Heart right ventricle (tissue), 16 donors: ENCODE measurements at regions of chr18 and their contacts with region 1.

Region 1: GRCh38 chr18:53745224-53745967 is 479.1 kb downstream of the MBD2 start:
- DNase-seq: no peak
- ATAC-seq: no peak
- H3K4me3 ChIP-seq: no peak overlapping the region
- H3K27ac ChIP-seq: no peak overlapping the region
- H3K4me1 ChIP-seq: no peaks in the 10 kb centered on the region
- H3K27me3 ChIP-seq: no peaks in the 10 kb centered on the region
- CTCF ChIP-seq: no peak

Region 2: GRCh38 chr18:53757328-53757727 is 11.9 kb after region 1 on chr18:
- intact Hi-C with region 1: no loop called
- DNase-seq: no peak
- ATAC-seq: no peak
- H3K4me3 ChIP-seq: no peak overlapping the region
- H3K27ac ChIP-seq: no peak overlapping the region
- H3K4me1 ChIP-seq: no peaks in the 10 kb centered on the region
- H3K27me3 ChIP-seq: no peaks in the 10 kb centered on the region
- CTCF ChIP-seq: no peak

Region 3: DNA sequence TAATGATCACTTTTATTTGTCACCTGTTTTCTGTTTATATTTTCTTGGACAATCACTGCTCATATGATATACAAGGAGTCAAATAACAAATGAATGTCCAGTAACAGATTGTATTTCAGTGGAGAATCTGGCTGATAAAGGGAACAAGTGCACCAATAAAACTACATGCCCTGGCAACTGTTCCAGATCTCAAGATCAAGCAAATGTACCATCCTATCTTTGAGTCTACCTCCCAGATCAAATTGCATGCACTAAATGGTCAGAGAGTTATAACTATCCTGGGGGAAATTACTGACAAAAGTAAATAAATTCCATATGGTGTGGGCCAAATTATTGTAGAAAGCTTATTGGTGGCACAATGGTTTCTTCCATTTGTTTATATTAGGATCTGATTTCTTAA is 26.3 kb after region 1 on chr18:
- intact Hi-C with region 1: loop called in 1 of 10 experiments (anchors 1 kb)
- DNase-seq: no peak
- ATAC-seq: no peak
- H3K4me3 ChIP-seq: no peak overlapping the region
- H3K27ac ChIP-seq: no peak overlapping the region
- H3K4me1 ChIP-seq: no peaks in the 10 kb centered on the region
- H3K27me3 ChIP-seq: no peaks in the 10 kb centered on the region
- CTCF ChIP-seq: no peak

Region 4: GRCh38 chr18:53909668-53910067 is 164.3 kb after region 1 on chr18:
- intact Hi-C with region 1: no loop called
- DNase-seq: no peak
- ATAC-seq: no peak
- H3K4me3 ChIP-seq: no peak overlapping the region
- H3K27ac ChIP-seq: no peak overlapping the region
- H3K4me1 ChIP-seq: peaks cover 0 to 24% (median 0%) of the 10 kb centered on the region in 9 donors
- H3K27me3 ChIP-seq: no peaks in the 10 kb centered on the region
- CTCF ChIP-seq: peak in 6 of 9 donors; percentile 17 to 54 (median 40)